Left ventricle myocardium superior (tissue), 1 donor: ENCODE measurements at regions of chr3 and their contacts with region 1.

Region 1: DNA sequence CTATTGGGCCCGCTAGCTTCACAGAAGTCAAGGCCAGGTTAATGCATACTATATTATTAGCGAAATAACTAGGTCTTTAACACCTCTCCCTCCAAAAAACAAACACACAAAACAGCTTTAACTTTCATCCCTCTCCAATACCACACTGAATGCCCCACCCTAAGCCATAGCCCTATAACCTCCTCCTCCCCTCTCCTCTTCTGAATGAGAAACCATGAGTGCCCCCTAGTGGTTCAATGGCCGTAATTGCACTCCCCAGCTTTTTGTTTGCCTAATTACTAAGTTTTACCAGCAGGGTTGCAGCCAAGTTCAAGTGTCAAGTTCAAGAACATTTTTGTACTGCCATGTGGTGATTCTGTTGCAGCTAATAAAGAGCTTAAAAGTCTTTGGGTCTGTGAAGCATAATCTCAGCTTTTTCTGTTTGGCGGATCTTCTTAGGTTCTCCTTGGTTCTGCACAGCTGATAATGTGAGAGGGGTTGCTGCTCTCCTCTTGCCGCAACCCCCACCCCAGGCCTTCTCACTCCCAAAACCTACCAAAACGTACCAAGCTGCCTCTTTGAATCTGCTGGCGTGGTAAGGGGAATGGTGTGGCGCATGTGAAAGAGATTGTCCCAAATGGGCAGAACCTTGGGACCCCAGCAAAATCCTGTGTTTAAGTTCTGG is 57.9 kb downstream of the RPL22L1 start:
- DNase-seq: peak; percentile 35
- ATAC-seq: peak; percentile 83

Region 2: GRCh38 chr3:170307671-170308403 is 504.2 kb before region 1 on chr3:
- intact Hi-C with region 1: loop called (anchors 2 kb)
- DNase-seq: no peak
- ATAC-seq: no peak

Region 3: GRCh38 chr3:170414202-170414663 is 397.8 kb before region 1 on chr3:
- intact Hi-C with region 1: loop called (anchors 5 kb)
- DNase-seq: no peak
- ATAC-seq: peak; percentile 64